SK-N-SH (cell line): ENCODE measurements at regions of chr16 and their contacts with region 1.

Region 1: DNA sequence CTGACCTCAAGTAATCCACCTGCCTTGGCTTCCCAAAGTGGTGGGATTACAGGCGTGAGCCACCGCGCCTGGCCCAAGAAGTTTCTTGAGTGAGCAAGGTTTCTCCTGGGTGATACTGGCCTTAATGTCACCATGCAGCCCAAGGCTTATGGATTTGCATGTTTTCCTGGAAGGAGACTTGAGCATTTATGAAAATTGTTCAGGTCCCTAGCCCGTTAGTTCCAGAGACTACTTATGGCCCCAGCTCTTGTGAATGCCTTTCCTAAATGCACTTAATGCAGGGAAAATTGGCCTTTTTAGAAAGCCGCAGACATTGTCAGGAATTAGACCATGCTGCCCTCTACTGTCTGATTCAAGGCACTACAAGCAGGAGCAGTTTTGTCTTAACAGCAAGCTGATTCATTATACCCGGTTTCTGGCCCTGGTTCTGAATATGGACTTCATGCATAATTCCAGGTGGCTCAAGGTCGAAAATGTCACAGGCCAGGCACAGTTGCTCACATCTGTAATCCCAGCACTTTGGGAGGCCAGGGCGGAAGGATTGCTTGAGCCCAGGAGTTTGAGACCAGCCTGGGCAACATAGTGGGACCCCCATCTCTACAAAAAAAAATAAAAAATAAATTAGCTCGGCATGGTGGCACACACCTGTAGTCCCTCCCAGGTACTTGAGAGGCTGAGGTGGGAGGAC is 91.3 kb downstream of the SNX29 start:
- DNase-seq: peak; percentile 74
- H3K4me3 ChIP-seq: no peak overlapping the region; a peak in 1 of 4 replicates
- H3K27ac ChIP-seq: no peak overlapping the region
- H3K4me1 ChIP-seq: 0 out of 4 replicates have a peak, but pooled peaks cover 0 to under 1% of the 10 kb centered on the region in 2 experiments
- H3K27me3 ChIP-seq: no peaks in the 10 kb centered on the region
- CTCF ChIP-seq: peak; percentile 94
- EP300 ChIP-seq: no peak
- RAD21 ChIP-seq: peak; percentile 98

Region 2: DNA sequence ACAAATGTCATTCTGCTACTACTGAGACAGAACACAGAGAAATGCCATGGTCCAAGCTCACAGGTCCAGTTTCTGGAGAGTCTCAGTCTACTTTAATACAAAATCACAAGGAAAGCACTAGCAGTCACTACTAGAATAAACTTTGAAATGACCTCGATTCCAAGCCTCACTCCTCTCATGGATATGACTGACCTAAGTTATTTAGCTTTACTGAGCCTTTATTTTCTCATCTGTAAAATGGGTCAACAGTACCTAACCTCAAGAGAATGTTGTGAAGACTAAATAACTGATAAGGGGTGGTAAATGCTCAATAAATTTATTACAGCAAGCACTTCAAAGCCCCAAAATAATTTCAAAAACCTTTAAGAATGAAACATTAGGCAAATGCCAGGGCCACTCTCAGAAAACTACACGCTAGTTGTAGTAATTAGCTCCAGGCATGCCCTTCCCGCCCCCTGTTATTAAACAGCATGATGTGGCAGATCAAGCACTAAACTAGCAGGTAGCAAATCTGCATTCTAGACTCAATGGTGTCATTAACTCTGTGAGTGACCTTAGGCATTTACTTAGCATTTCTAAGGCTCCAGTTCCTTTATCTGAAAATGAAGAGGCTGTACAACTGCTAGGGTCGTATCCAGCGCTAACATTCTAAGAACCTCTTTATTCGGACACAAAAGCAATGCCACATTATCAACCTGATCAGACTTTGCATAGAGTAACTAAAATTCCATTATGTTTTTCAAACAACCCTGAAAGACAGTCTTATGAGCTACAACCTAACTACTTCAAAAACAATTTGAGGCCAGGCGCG is 160.5 kb before region 1 on chr16:
- CTCF ChIA-PET with region 1: interaction called, 16 read pairs
- POLR2A ChIA-PET with region 1: no interaction called
- DNase-seq: no peak
- H3K4me3 ChIP-seq: no peak overlapping the region
- H3K27ac ChIP-seq: no peak overlapping the region
- H3K4me1 ChIP-seq: peaks cover 3 to 15% of the 10 kb centered on the region in 2 experiments; a peak in 3 of 4 replicates
- H3K27me3 ChIP-seq: no peaks in the 10 kb centered on the region
- CTCF ChIP-seq: no peak
- EP300 ChIP-seq: no peak
- RAD21 ChIP-seq: no peak

Region 3: DNA sequence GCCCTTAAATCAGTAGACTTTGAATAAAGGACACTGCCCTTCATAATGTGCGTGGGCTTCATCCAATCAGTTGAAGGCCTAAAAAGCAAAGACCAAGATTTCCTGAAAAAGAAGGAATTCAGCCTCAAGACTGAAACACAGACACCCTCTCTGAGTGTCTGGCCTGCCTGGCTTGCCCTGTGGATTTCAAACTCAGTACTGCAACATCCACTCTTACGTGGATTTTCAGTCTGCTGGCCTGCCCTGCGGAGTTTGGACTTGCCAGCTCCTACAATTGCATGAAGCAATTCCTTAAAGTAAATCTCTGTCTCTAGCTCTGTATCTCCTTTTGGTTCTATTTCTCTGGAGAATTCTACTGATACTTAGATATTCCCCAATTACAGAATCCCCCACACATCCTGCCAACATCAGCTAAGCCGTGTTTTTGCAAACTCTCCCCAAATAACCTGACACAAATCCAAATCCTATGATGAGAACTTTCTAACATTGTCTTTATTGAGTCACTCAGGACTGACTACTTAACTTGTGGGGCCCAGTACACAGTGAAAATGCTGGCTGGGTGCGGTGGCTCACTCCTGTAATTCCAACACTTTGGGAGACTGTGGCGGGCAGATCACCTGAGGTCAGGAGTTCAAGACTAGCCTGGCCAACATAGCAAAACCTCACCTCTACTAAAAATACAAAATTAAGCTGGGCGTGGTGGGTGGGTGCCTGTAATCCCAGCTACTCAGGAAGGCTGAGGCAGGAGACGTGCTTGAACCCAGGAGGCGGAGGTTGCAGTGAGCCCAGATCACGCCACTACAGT is 110.1 kb before region 1 on chr16:
- CTCF ChIA-PET with region 1: interaction called, 20 read pairs
- POLR2A ChIA-PET with region 1: no interaction called
- DNase-seq: no peak
- H3K4me3 ChIP-seq: no peak overlapping the region
- H3K27ac ChIP-seq: peak overlapping the region in 1 of 2 experiments; percentile 45; a peak in 1 of 4 replicates
- H3K4me1 ChIP-seq: peaks cover 0 to 8% of the 10 kb centered on the region in 2 experiments; a peak in 2 of 4 replicates
- H3K27me3 ChIP-seq: no peaks in the 10 kb centered on the region
- CTCF ChIP-seq: no peak
- EP300 ChIP-seq: no peak
- RAD21 ChIP-seq: no peak

Region 4: GRCh38 chr16:11972128-11972527 is 95.7 kb before region 1 on chr16:
- CTCF ChIA-PET with region 1: interaction called, 28 read pairs
- POLR2A ChIA-PET with region 1: no interaction called
- DNase-seq: no peak
- H3K4me3 ChIP-seq: no peak overlapping the region
- H3K27ac ChIP-seq: no peak overlapping the region
- H3K4me1 ChIP-seq: peaks cover 0 to 2% of the 10 kb centered on the region in 2 experiments; a peak in 1 of 4 replicates
- H3K27me3 ChIP-seq: no peaks in the 10 kb centered on the region
- CTCF ChIP-seq: peak; percentile 42
- EP300 ChIP-seq: no peak
- RAD21 ChIP-seq: no peak

Region 5: DNA sequence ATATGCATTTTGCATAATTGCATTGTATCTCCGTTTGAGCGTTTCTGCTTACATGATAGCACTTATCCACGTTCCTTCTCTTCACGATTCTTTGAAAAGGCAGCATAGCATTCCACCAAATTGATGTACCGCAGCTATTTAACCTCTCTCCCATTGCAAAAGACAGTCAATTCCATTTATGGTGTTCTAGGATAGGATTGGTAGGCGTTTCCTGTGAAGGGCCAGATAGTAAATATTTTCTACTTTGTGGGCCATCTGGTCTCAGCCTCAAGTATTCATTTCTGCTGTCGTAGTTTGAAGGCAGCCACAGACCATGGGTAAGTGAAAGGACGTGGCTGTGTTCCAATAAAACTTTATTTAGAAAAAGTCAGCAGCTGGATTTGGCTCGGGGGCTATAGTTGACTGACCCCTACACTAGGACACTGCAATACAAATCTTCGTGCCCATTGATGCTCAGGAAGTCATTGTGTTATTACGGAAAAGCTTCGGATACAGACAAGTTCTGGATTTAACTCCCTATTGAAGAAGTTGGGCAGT is 81.3 kb before region 1 on chr16:
- CTCF ChIA-PET with region 1: interaction called, 27 read pairs
- POLR2A ChIA-PET with region 1: no interaction called
- DNase-seq: no peak
- H3K4me3 ChIP-seq: no peak overlapping the region
- H3K27ac ChIP-seq: no peak overlapping the region
- H3K4me1 ChIP-seq: no peaks in the 10 kb centered on the region
- H3K27me3 ChIP-seq: no peaks in the 10 kb centered on the region
- CTCF ChIP-seq: no peak
- EP300 ChIP-seq: no peak
- RAD21 ChIP-seq: no peak

Region 6: GRCh38 chr16:12057266-12057665 is 10.6 kb before region 1 on chr16:
- CTCF ChIA-PET with region 1: interaction called, 31 read pairs
- POLR2A ChIA-PET with region 1: no interaction called
- DNase-seq: no peak
- H3K4me3 ChIP-seq: no peak overlapping the region
- H3K27ac ChIP-seq: no peak overlapping the region
- H3K4me1 ChIP-seq: peaks cover 0 to 11% of the 10 kb centered on the region in 2 experiments; a peak in 1 of 4 replicates
- H3K27me3 ChIP-seq: no peaks in the 10 kb centered on the region
- CTCF ChIP-seq: no peak
- EP300 ChIP-seq: no peak
- RAD21 ChIP-seq: no peak

Region 7: DNA sequence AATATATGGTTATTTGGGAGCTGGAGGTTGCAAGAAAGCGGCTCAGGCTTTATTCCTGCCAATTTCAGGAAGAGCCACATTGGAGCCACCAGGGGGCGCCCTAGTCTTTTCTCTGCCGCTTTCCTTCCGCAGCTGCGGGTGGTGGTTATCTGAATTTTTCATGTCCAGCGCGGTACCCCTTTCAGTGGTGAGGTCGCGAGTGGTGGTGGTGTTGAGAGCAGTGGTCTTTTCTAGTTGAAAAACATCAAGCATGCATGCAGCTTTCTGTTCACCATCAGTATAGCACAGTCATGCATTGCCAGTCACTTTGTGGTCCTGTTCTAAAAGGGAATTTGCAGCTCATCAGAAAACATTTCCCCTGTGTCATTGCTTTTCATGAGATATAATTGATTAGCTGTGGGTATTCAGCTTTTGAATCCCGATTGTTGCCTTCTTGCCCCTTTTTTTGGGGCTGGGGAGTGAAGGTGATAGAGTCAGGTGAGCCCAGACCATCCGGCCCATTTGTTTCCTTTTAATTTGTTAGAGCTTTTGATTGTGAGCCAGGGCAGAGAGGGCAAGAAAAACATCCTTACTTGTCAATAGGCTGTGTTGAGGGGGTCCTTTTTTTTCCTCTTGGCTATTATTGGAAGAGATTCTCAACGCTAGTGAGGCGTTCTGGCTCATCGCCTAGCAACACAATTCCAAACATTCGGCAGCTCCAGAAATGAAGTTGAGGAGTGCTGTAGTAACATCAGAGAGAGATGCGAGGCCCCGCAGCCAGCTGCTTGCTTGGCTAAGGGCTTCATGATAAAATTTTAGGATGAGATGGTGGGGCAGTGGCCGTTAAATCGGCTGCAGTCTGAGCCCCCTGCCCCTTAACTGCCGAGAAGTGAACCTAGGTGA is 27.7 kb after region 1 on chr16:
- CTCF ChIA-PET with region 1: interaction called, 23 read pairs
- POLR2A ChIA-PET with region 1: no interaction called
- DNase-seq: peak; percentile 76
- H3K4me3 ChIP-seq: peak overlapping the region in 1 of 2 experiments; percentile 42; a peak in 1 of 4 replicates
- H3K27ac ChIP-seq: no peak overlapping the region
- H3K4me1 ChIP-seq: peaks cover 3 to 14% of the 10 kb centered on the region in 2 experiments; a peak in 2 of 4 replicates
- H3K27me3 ChIP-seq: no peaks in the 10 kb centered on the region
- CTCF ChIP-seq: peak; percentile 97
- EP300 ChIP-seq: no peak
- RAD21 ChIP-seq: peak; percentile 84

Region 8: GRCh38 chr16:12311309-12311708 is 243.5 kb after region 1 on chr16:
- CTCF ChIA-PET with region 1: no interaction called
- POLR2A ChIA-PET with region 1: no interaction called
- DNase-seq: no peak
- H3K4me3 ChIP-seq: no peak overlapping the region
- H3K27ac ChIP-seq: no peak overlapping the region; a peak in 1 of 4 replicates
- H3K4me1 ChIP-seq: peaks cover 0 to 2% of the 10 kb centered on the region in 2 experiments; a peak in 1 of 4 replicates
- H3K27me3 ChIP-seq: no peaks in the 10 kb centered on the region
- CTCF ChIP-seq: no peak
- EP300 ChIP-seq: no peak
- RAD21 ChIP-seq: no peak